OCI-LY7 (cell line): ENCODE measurements at regions of chr4 and their contacts with region 1.

Region 1: GRCh38 chr4:82275431-82276331 is 98.1 kb downstream of the HNRNPD start:
- DNase-seq: peak; percentile 63
- H3K4me3 ChIP-seq: no peak overlapping the region
- H3K27ac ChIP-seq: no peak overlapping the region
- H3K4me1 ChIP-seq: peaks cover 12% of the 10 kb centered on the region
- CTCF ChIP-seq: peak; percentile 73

Region 2: DNA sequence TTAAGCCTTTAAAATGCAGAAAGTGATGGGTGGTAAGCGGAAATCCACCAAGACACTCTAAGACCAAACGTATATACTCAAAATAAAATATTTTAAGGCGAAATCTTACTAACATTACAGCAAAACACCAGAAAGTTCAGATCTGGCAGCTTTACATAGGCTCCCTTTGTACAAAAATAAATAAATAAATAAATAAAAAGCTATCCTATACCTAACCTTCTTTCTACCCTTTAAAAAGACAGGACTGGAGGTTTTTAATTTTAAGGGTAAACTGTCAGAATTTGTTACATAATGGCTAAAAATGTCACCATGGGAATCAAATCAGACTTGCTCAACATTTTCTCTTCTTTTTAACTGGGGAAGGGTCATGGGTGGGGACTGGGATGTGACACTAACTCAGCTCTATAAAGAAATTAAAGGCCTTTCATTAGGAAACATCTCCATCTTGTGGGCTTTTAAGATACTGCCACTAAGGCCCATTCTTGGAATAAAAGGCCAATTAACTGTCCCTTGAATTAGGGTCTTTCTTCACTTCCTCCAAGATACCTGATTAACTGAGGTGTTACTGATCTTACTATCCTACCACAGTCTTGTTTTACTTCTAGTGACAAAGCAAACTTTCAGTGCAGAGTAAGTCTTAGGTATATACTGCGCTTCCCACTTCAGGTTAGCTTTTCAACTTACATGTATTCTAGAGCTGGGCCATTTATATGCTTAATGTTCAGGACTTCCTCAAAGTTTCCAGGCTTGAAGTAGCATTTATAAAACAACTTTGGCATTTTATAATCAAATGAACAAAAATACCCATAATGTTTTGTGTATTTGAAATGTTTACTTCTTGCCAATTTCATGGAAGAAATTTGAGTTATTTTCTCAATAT is 84.9 kb after region 1 on chr4:
- CTCF ChIA-PET with region 1: interaction called, 4 read pairs
- POLR2A ChIA-PET with region 1: no interaction called
- intact Hi-C with region 1: loop called (anchors 2 kb)
- DNase-seq: peak; percentile 50
- H3K4me3 ChIP-seq: no peak overlapping the region
- H3K27ac ChIP-seq: peak overlapping the region; percentile 6
- H3K4me1 ChIP-seq: peaks cover 47% of the 10 kb centered on the region
- CTCF ChIP-seq: peak; percentile 86

Region 3: GRCh38 chr4:82428969-82429727 is 153.5 kb after region 1 on chr4:
- CTCF ChIA-PET with region 1: no interaction called
- POLR2A ChIA-PET with region 1: no interaction called
- intact Hi-C with region 1: loop called (anchors 5 kb)
- DNase-seq: peak; percentile 92
- H3K4me3 ChIP-seq: peak overlapping the region; percentile 99
- H3K27ac ChIP-seq: peak overlapping the region; percentile 90
- H3K4me1 ChIP-seq: peaks cover 53% of the 10 kb centered on the region
- CTCF ChIP-seq: peak; percentile 84

Region 4: DNA sequence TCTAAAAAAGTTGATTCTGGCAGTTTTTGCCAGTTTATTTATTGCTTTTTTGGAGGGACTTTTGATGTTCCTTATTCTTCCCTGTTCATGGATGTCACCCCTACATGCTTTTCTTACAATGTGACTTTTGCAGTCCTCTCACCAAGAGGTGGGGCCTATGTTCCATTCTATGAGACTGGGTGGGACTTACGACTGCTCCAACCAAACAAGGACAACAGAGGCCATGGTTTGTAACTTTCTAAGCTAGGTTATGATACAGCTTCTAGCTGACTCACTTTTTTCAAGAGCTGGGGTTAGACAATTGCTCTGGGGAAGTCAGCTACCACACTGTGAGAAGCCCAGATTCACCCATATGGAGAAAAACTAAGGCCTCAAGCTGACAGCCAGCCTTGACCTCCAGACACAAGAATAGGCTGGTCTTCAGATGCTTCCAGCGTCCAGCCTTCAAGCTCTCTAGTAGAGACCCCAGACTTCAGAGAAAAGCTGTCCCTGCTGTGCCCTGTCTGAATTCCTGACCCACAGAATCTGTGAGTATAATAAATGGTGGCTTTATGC is 194.2 kb after region 1 on chr4:
- CTCF ChIA-PET with region 1: no interaction called
- POLR2A ChIA-PET with region 1: no interaction called
- intact Hi-C with region 1: no loop called
- DNase-seq: no peak
- H3K4me3 ChIP-seq: no peak overlapping the region
- H3K27ac ChIP-seq: no peak overlapping the region
- H3K4me1 ChIP-seq: no peaks in the 10 kb centered on the region
- CTCF ChIP-seq: no peak